Activated CD4-positive, alpha-beta memory T cell treated with anti-CD3 and anti-CD28 coated beads, Interleukin-2, amount 10 ng/mL, durations not matched to agents 7 days and 5 days (primary cell): ENCODE measurements at regions of chr19 and their contacts with region 1.

Region 1: DNA sequence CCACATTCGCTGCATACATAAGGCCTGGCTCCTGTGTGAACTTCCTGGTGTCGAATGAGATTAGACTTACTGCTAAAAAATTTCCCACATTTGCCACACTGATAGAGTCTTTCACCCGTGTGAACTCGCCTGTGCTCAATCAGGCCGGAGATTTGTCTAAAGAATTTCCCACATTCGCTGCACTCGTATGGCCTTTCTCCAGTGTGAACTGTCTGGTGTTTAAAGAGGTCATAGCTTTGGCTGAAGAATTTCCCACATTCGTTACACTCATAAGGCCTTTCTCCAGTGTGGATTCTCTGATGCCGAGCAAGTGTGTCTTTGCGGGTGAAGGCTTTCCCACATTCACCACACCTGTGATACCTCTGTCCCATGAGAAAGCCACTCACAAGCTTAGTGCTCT is 6.5 kb downstream of the ZNF671 start:
- DNase-seq: no peak
- H3K4me3 Mint-ChIP-seq: no peak overlapping the region
- H3K27ac Mint-ChIP-seq: no peak overlapping the region
- H3K4me1 Mint-ChIP-seq: peaks cover 5% of the 10 kb centered on the region
- H3K27me3 Mint-ChIP-seq: no peaks in the 10 kb centered on the region

Region 2: DNA sequence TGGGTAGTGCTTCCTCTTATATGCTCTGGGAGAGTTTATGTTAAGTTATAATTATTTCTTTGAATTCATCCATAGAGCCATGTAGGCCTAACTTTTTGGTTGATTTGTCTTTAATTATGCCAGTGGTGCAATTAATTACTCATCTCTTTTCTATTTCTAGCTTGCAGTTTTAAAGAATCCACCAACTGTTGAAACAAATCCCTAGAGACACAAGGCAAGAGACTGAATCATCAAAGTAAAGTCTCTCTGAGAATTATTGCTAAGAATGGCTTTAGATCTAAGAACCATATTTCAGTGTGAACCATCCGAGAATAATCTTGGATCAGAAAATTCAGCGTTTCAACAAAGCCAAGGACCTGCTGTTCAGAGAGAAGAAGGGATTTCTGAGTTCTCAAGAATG is 45.0 kb before region 1 on chr19:
- CTCF ChIA-PET with region 1: no interaction called
- POLR2A ChIA-PET with region 1: no interaction called
- DNase-seq: no peak
- H3K4me3 Mint-ChIP-seq: no peak overlapping the region
- H3K27ac Mint-ChIP-seq: no peak overlapping the region
- H3K4me1 Mint-ChIP-seq: no peaks in the 10 kb centered on the region
- H3K27me3 Mint-ChIP-seq: no peaks in the 10 kb centered on the region

Region 3: DNA sequence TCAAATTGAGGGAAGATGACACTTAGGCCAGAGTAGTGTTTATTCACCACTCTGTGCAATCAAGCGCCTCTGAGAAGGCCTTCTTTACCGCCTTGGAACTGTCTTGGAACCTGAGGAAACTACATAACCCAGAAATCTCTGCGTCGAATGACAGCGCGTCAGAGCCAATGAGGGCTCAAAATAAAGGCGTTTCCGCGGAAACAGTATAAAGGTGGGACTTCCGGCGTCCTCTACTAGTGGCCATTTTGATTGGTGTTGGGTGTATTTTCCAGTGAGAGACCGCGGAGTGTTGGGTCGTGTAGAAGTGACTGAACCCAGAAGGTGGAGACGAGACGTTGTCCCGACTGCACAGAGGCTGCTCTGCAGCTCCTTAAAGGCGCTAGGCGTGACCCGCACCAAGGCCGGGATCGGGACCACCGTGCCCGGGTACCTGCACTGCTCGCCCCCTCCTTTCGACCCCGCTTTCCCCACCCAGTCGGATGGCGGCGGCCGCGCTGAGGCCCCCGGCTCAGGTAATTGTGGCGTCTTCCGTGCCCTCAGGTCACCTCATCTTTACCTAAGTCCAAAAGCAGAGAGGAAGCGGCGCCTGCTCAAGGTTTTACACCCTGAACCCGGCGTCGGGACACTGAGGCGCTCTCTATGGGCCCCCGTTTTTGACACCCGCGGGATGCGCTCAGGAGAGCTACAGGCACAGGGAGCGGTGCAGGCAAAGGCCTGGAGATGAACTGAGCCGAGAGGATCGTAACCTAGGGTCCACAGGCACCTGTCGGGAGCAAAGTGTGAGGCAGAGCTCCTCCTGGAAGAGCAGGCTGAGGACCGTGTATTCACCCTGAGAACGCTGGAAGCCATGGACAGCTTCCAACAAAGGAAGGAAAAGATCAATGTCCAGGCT is 25.9 kb after region 1 on chr19 and contains the start of gene ZNF776:
- CTCF ChIA-PET with region 1: no interaction called
- POLR2A ChIA-PET with region 1: interaction called, 15 read pairs
- DNase-seq: peak; percentile 87
- H3K4me3 Mint-ChIP-seq: peak within 1 kb of the TSS; percentile 91
- H3K27ac Mint-ChIP-seq: peak within 1 kb of the TSS; percentile 84
- H3K4me1 Mint-ChIP-seq: peaks cover 23% of the 10 kb centered on the region
- H3K27me3 Mint-ChIP-seq: no peaks in the 10 kb centered on the region
- total RNA-seq, gene ZNF776: 14.9 to 15.1 TPM